Left ventricle myocardium inferior (tissue), 1 donor: ENCODE measurements at regions of chr4 and their contacts with region 1.

Region 1: GRCh38 chr4:26410385-26411293 is 79.6 kb downstream of the CCKAR start:
- DNase-seq: no peak
- H3K4me3 ChIP-seq: no peak overlapping the region
- H3K27ac ChIP-seq: no peak overlapping the region
- H3K4me1 ChIP-seq: peaks cover 23% of the 10 kb centered on the region
- H3K27me3 ChIP-seq: no peaks in the 10 kb centered on the region
- CTCF ChIP-seq: peak; percentile 76

Region 2: DNA sequence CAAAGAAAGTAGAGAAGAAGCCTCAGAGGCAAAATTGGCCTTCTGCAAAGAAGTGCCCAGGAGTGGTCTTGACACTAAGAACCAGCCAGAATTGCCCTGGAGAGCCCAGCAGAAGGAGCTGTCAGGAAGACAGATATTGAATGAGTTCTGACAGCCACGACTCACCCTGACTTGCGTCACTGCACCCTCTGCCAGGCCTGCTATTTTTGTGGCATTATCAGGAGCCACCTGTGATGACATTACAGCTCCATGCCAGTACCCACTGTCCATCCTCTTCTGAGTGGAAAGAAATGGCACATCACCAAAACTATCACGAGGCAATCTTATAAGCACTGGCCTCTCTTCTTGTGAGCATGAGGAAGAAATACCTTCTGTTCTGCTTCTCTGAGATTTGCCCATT is 428.9 kb before region 1 on chr4:
- intact Hi-C with region 1: loop called (anchors 10 kb)
- DNase-seq: peak; percentile 62
- H3K4me3 ChIP-seq: no peak overlapping the region
- H3K27ac ChIP-seq: peak overlapping the region; percentile 42
- H3K4me1 ChIP-seq: no peaks in the 10 kb centered on the region
- H3K27me3 ChIP-seq: no peaks in the 10 kb centered on the region
- CTCF ChIP-seq: no peak

Region 3: GRCh38 chr4:26028793-26029567 is 381.7 kb before region 1 on chr4:
- intact Hi-C with region 1: loop called (anchors 5 kb)
- DNase-seq: peak; percentile 75
- H3K4me3 ChIP-seq: peak overlapping the region; percentile 51
- H3K27ac ChIP-seq: peak overlapping the region; percentile 3
- H3K4me1 ChIP-seq: peaks cover 18% of the 10 kb centered on the region
- H3K27me3 ChIP-seq: peaks cover 23% of the 10 kb centered on the region
- CTCF ChIP-seq: peak; percentile 82

Region 4: GRCh38 chr4:26126143-26126718 is 284.4 kb before region 1 on chr4:
- intact Hi-C with region 1: no loop called
- DNase-seq: no peak
- H3K4me3 ChIP-seq: no peak overlapping the region
- H3K27ac ChIP-seq: no peak overlapping the region
- H3K4me1 ChIP-seq: no peaks in the 10 kb centered on the region
- H3K27me3 ChIP-seq: peaks cover 4% of the 10 kb centered on the region
- CTCF ChIP-seq: no peak

Region 5: GRCh38 chr4:26330186-26330787 is 80.4 kb before region 1 on chr4:
- intact Hi-C with region 1: loop called (anchors 5 kb)
- DNase-seq: no peak
- H3K4me3 ChIP-seq: no peak overlapping the region
- H3K27ac ChIP-seq: no peak overlapping the region
- H3K4me1 ChIP-seq: peaks cover 63% of the 10 kb centered on the region
- H3K27me3 ChIP-seq: no peaks in the 10 kb centered on the region
- CTCF ChIP-seq: peak; percentile 74